ENCODE measurements at regions of chr1 and their contacts with region 1.

Region 1: GRCh38 chr1:240691521-240692338 is 79.8 kb upstream of the GREM2 start:
- DNase-seq: peak; percentile 69
- H3K4me3 ChIP-seq: peak overlapping the region in 1 of 2 experiments; percentile 16; a peak in 1 of 4 replicates
- H3K27ac ChIP-seq: peak overlapping the region in 1 of 2 experiments; percentile 50; a peak in 2 of 4 replicates
- H3K4me1 ChIP-seq: peaks cover 0 to 12% of the 10 kb centered on the region in 2 experiments; a peak in 2 of 4 replicates
- H3K27me3 ChIP-seq: no peaks in the 10 kb centered on the region
- CTCF ChIP-seq: peak; percentile 90
- EP300 ChIP-seq: no peak
- RAD21 ChIP-seq: peak; percentile 97

Region 2: GRCh38 chr1:240027059-240027462 is 664.7 kb before region 1 on chr1:
- CTCF ChIA-PET with region 1: interaction called, 34 read pairs
- POLR2A ChIA-PET with region 1: no interaction called
- DNase-seq: peak; percentile 65
- H3K4me3 ChIP-seq: peak overlapping the region in 1 of 2 experiments; percentile 9; a peak in 1 of 4 replicates
- H3K27ac ChIP-seq: peak overlapping the region in 1 of 2 experiments; percentile 48; a peak in 2 of 4 replicates
- H3K4me1 ChIP-seq: peaks cover 17 to 22% of the 10 kb centered on the region in 2 experiments; a peak in 3 of 4 replicates
- H3K27me3 ChIP-seq: no peaks in the 10 kb centered on the region
- CTCF ChIP-seq: peak; percentile 99
- EP300 ChIP-seq: no peak
- RAD21 ChIP-seq: peak; percentile 94

Region 3: GRCh38 chr1:240189386-240189989 is 502.2 kb before region 1 on chr1:
- CTCF ChIA-PET with region 1: interaction called, 63 read pairs
- POLR2A ChIA-PET with region 1: no interaction called
- DNase-seq: peak; percentile 44
- H3K4me3 ChIP-seq: no peak overlapping the region; a peak in 1 of 4 replicates
- H3K27ac ChIP-seq: no peak overlapping the region; a peak in 1 of 4 replicates
- H3K4me1 ChIP-seq: peaks cover 15 to 29% of the 10 kb centered on the region in 2 experiments; a peak in 3 of 4 replicates
- H3K27me3 ChIP-seq: no peaks in the 10 kb centered on the region
- CTCF ChIP-seq: peak; percentile 91
- EP300 ChIP-seq: no peak
- RAD21 ChIP-seq: peak; percentile 74

Region 4: DNA sequence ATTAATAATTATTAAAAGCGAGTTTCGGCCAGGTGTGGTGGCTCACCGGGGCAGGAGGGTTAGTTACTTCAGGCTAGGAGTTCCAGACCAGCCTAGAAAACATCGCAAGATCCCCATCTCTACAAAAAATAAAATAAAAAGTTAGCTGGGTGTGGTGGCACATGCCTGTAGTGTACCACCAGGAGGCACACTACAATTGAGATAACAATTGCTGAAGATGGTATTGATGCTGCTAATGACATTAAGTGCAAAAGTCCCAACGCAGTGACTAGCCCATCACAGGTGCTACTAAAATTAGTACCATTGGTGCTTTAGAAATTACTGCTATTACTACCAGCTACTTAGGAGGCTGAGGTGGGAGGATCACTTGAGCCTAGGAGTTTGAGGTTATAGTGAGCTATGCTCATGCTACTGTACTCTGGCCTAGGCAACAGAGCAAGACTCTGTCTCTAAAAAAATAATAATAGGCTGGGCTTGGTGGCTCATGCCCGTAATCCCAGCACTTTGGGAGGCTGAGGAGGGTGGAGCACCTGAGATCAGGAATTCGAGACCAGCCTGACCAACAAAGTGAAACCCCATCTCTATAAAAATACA is 236.4 kb before region 1 on chr1:
- CTCF ChIA-PET with region 1: interaction called, 14 read pairs
- POLR2A ChIA-PET with region 1: no interaction called
- DNase-seq: peak; percentile 11
- H3K4me3 ChIP-seq: no peak overlapping the region
- H3K27ac ChIP-seq: no peak overlapping the region
- H3K4me1 ChIP-seq: peaks cover 0 to 8% of the 10 kb centered on the region in 2 experiments; a peak in 1 of 4 replicates
- H3K27me3 ChIP-seq: no peaks in the 10 kb centered on the region
- CTCF ChIP-seq: peak; percentile 67
- EP300 ChIP-seq: no peak
- RAD21 ChIP-seq: peak; percentile 57

Region 5: GRCh38 chr1:240618946-240619345 is 72.8 kb before region 1 on chr1:
- CTCF ChIA-PET with region 1: interaction called, 18 read pairs
- POLR2A ChIA-PET with region 1: no interaction called
- DNase-seq: no peak
- H3K4me3 ChIP-seq: no peak overlapping the region
- H3K27ac ChIP-seq: no peak overlapping the region
- H3K4me1 ChIP-seq: no peaks in the 10 kb centered on the region
- H3K27me3 ChIP-seq: no peaks in the 10 kb centered on the region
- CTCF ChIP-seq: no peak
- EP300 ChIP-seq: no peak
- RAD21 ChIP-seq: no peak

Measured in SK-N-SH (cell line).